Panc1 (cell line): ENCODE measurements at regions of chr12 and their contacts with region 1.

Region 1: DNA sequence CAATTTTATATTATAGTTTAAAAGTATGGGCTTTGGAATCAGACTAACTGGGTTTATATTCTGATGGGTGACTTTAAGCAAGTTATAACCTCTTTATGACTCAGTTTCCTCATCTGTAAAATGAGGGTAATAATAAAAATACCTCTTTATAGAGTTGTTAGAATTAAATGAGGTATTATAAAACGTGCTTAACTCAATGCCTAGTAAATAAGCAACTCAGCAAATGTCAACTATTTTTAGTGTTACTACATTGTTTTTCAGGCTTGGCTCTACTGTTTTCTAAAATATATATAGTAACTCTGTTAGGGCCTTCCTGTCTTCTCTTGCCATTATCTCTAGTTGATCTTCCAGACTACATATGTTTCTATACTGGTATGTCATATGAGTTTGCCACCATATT is 20.5 kb downstream of the VEZT start:
- DNase-seq: no peak
- ATAC-seq: no peak
- H3K4me3 ChIP-seq: no peak overlapping the region
- H3K27ac ChIP-seq: no peak overlapping the region
- H3K4me1 ChIP-seq: no peaks in the 10 kb centered on the region; the same call in 1 of the 2 replicates
- H3K27me3 ChIP-seq: no peaks in the 10 kb centered on the region
- CTCF ChIP-seq: no peak

Region 2: GRCh38 chr12:95054206-95054605 is 183.9 kb before region 1 on chr12:
- CTCF ChIA-PET with region 1: no interaction called
- POLR2A ChIA-PET with region 1: no interaction called
- in situ Hi-C with region 1: no loop called
- intact Hi-C with region 1: no loop called
- DNase-seq: no peak
- ATAC-seq: no peak
- H3K4me3 ChIP-seq: no peak overlapping the region
- H3K27ac ChIP-seq: no peak overlapping the region
- H3K4me1 ChIP-seq: no peaks in the 10 kb centered on the region
- H3K27me3 ChIP-seq: no peaks in the 10 kb centered on the region
- CTCF ChIP-seq: no peak

Region 3: DNA sequence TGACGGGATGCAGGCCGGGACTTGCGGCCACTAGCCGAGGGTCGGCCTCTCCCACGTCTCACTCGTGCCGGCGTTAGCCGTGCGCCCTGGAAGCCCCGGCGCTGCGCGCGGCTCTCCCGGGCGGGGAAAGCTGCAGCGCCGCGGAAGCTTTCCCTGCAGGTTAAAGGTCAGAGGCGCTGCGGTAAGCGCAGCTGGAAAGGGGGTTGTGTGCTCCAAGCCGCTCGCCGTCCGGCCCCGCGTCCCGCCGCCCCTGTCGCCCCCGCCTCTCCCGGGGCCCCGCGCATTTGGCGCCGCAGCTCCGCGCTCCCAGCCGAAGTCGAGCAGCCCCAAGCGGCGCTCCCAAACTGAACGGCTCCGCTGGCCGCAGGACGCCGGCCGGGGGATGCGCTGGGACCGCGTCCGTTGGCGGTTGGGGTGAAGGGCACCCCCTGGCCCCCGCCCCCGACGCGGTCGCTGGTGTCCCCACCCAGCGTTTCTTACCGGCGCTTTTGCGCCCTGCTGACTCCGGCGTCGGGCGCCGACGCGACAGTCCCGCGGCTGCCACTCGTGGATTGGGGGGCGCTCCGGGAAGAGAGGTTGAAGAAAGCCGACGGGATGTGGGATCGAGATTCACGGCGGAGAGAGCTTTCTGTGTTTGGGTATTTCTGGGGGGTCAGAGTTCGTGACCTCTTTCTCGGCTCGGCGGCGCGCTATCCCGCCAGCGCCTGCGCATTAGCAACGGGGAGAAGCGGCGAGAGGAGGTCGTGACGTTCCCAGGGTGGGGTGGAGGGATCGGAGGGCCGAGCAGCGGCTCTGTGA is 165.1 kb before region 1 on chr12 and contains the start of gene NR2C1:
- CTCF ChIA-PET with region 1: no interaction called
- POLR2A ChIA-PET with region 1: interaction called, 17 read pairs
- in situ Hi-C with region 1: no loop called
- intact Hi-C with region 1: no loop called
- DNase-seq: peak; percentile 60
- ATAC-seq: peak; percentile 96
- H3K4me3 ChIP-seq: peak within 1 kb of the TSS; percentile 79 to 96
- H3K27ac ChIP-seq: peak within 1 kb of the TSS; percentile 97
- H3K4me1 ChIP-seq: peaks cover 11% of the 10 kb centered on the region
- H3K27me3 ChIP-seq: no peaks in the 10 kb centered on the region
- CTCF ChIP-seq: no peak
- total RNA-seq, gene NR2C1: 84.6 TPM

Region 4: DNA sequence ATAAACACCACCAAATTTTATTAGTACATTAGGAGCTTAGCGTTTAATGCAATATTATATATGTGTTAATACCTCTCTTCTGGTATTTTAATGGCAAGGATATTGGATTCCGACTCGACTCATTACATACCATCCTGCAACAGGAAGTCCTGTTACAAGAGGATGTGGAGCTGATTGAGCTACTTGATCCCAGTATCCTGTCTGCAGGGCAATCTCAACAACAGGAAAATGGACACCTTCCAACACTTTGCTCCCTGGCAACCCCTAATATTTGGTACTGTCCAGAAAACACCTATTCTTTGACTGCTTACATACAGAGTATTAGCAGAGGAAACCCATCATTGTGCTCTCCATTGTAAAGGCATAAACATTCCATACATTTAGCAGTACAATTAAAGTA is 24.7 kb after region 1 on chr12:
- CTCF ChIA-PET with region 1: no interaction called
- POLR2A ChIA-PET with region 1: no interaction called
- in situ Hi-C with region 1: no loop called
- intact Hi-C with region 1: no loop called
- DNase-seq: no peak
- ATAC-seq: no peak
- H3K4me3 ChIP-seq: no peak overlapping the region
- H3K27ac ChIP-seq: no peak overlapping the region
- H3K4me1 ChIP-seq: no peaks in the 10 kb centered on the region
- H3K27me3 ChIP-seq: no peaks in the 10 kb centered on the region
- CTCF ChIP-seq: no peak